GM12878 (cell line): ENCODE measurements at regions of chr6 and their contacts with region 1.

Region 1: DNA sequence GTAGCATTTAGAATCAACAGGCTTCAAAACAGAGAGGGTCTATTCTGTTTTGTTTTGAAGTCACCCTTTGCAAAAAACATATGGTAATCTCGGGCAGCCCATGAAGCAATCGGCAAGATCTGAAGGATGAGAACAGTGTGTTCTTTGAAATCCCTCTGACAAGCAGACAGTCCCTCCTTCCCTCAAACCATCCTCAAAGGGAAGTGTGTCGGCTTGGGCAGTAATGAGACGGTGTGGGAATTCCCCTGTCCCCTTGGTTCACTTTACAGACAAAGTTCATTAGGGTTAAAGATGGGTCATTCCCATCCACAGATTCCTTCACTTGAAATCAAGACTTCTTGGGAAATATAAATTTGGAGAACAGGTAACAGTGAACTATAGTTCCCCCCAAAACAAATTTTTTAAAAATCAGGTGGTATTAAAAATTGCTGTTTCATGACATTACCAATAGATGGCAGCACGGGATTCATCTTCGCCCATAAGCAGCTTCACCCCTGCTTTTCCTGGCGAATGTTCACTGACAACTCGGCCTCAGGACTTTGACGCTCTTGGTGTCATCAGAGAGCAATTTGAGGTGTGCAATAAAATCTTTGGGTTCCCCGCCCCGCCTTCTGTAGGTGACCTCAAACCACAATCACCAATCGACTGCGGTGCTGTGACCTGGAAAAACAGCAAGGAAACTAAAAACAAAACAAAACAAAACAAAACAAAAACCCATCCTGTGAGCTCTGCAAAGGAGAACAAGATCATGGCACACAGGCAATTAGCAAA is 159.3 kb upstream of the TNFAIP3 start:
- DNase-seq: peak; percentile 97
- ATAC-seq: peak; percentile 75
- H3K4me3 ChIP-seq: peak overlapping the region; percentile 49; the same call in 1 of the 2 replicates
- H3K27ac ChIP-seq: peak overlapping the region; percentile 64
- H3K4me1 ChIP-seq: peaks cover 39% of the 10 kb centered on the region
- H3K27me3 ChIP-seq: no peaks in the 10 kb centered on the region
- CTCF ChIP-seq: peak; percentile 67 to 88 (median 83); a peak in 5 of 6 replicates
- EP300 ChIP-seq: peak; percentile 33 to 57; a peak in 2 of 4 replicates
- POLR2A ChIP-seq: no peak
- RAD21 ChIP-seq: peak; percentile 91

Region 2: GRCh38 chr6:137661601-137662000 is 46.2 kb before region 1 on chr6:
- CTCF ChIA-PET with region 1: interaction called, 71 read pairs
- POLR2A ChIA-PET with region 1: interaction called, 3 read pairs
- RAD21 ChIA-PET with region 1: interaction called, 68 read pairs
- SMC1A ChIA-PET with region 1: interaction called, 236 read pairs
- in situ Hi-C with region 1: no loop called
- intact Hi-C with region 1: loop called (anchors 2 kb)
- DNase-seq: no peak
- ATAC-seq: peak; percentile 69
- H3K4me3 ChIP-seq: no peak overlapping the region
- H3K27ac ChIP-seq: no peak overlapping the region
- H3K4me1 ChIP-seq: peaks cover 5% of the 10 kb centered on the region; the same call in 1 of the 2 replicates
- H3K27me3 ChIP-seq: no peaks in the 10 kb centered on the region
- CTCF ChIP-seq: peak; percentile 51 to 75 (median 68)
- EP300 ChIP-seq: no peak
- POLR2A ChIP-seq: no peak
- RAD21 ChIP-seq: peak; percentile 66

Region 3: DNA sequence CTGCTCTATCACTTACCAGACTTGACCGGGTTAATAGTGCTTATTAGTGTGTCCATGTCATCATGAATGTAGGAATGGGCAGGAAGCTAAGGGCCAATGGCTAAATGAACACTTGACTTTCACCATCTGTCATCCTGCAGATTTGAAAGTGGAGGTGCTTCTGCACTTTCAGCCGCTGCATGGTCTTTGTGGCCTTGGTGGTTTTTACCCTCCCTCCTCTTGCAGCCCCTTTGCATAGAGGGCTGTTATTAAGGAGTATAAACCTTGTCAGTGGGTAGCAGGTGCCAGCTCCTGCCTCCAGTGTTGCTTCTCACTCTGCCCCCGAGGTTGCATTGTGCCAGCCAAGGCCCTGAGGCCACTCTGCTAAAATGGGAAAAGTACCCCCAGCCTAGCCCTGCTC is 37.1 kb after region 1 on chr6:
- CTCF ChIA-PET with region 1: interaction called, 10 read pairs
- POLR2A ChIA-PET with region 1: interaction called, 6 read pairs
- RAD21 ChIA-PET with region 1: interaction called, 7 read pairs
- SMC1A ChIA-PET with region 1: interaction called, 22 read pairs
- in situ Hi-C with region 1: no loop called
- intact Hi-C with region 1: loop called (anchors 2 kb)
- DNase-seq: peak; percentile 75
- ATAC-seq: peak; percentile 79
- H3K4me3 ChIP-seq: peak overlapping the region; percentile 29; the same call in 1 of the 2 replicates
- H3K27ac ChIP-seq: peak overlapping the region; percentile 34; the same call in 1 of the 2 replicates
- H3K4me1 ChIP-seq: peaks cover 36% of the 10 kb centered on the region
- H3K27me3 ChIP-seq: no peaks in the 10 kb centered on the region
- CTCF ChIP-seq: no peak
- EP300 ChIP-seq: peak; percentile 25 to 28; a peak in 2 of 4 replicates
- POLR2A ChIP-seq: no peak
- RAD21 ChIP-seq: no peak

Region 4: DNA sequence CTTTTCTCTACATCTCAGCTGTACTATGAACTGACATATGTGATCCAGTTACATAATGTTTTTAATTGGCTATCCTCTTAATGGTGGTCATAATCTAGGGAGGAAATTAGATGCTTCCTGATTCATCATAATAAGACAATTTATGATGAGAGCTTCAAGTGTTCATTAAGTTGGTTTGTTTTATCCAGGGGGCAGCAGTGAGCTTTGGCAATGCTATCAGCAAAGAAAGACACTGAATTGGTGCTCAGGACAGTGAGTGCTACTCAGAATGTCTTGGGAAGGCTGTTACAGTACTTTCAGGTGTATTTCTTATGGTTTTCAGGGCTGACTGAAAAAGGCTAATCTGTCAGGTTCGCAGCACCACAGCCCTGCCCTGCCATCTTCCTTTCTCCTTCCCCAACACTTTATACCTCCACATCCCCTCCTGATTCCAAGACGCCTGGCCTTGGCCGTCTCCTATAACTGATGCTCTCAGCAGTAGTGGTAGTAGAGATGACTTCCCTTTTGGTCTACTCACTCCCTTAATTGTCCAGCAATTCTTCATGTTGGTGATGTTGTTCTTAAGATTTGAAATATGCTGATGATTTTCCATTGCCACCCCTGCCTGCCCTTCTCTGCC is 92.3 kb after region 1 on chr6:
- CTCF ChIA-PET with region 1: interaction called, 37 read pairs
- POLR2A ChIA-PET with region 1: interaction called, 21 read pairs
- RAD21 ChIA-PET with region 1: interaction called, 41 read pairs
- SMC1A ChIA-PET with region 1: interaction called, 32 read pairs
- in situ Hi-C with region 1: loop called (anchors 5 kb)
- intact Hi-C with region 1: loop called (anchors 1 kb)
- DNase-seq: no peak
- ATAC-seq: peak; percentile 96
- H3K4me3 ChIP-seq: no peak overlapping the region
- H3K27ac ChIP-seq: no peak overlapping the region
- H3K4me1 ChIP-seq: peaks cover 19% of the 10 kb centered on the region
- H3K27me3 ChIP-seq: no peaks in the 10 kb centered on the region
- CTCF ChIP-seq: peak; percentile 67 to 78 (median 70)
- EP300 ChIP-seq: no peak
- POLR2A ChIP-seq: no peak
- RAD21 ChIP-seq: peak; percentile 88

Region 5: GRCh38 chr6:137873273-137873762 is 165.5 kb after region 1 on chr6:
- CTCF ChIA-PET with region 1: interaction called, 84 read pairs
- POLR2A ChIA-PET with region 1: interaction called, 13 read pairs
- RAD21 ChIA-PET with region 1: interaction called, 80 read pairs
- SMC1A ChIA-PET with region 1: interaction called, 117 read pairs
- in situ Hi-C with region 1: loop called (anchors 5 kb)
- intact Hi-C with region 1: no loop called
- DNase-seq: peak; percentile 95
- ATAC-seq: peak; percentile 54
- H3K4me3 ChIP-seq: peak overlapping the region; percentile 99
- H3K27ac ChIP-seq: peak overlapping the region; percentile 88
- H3K4me1 ChIP-seq: no peaks in the 10 kb centered on the region
- H3K27me3 ChIP-seq: no peaks in the 10 kb centered on the region
- CTCF ChIP-seq: no peak
- EP300 ChIP-seq: peak; percentile 62 to 64; a peak in 2 of 4 replicates
- POLR2A ChIP-seq: 0 out of 2 replicates have a peak, but pooled peaks have one; percentile 27
- RAD21 ChIP-seq: no peak

Region 6: DNA sequence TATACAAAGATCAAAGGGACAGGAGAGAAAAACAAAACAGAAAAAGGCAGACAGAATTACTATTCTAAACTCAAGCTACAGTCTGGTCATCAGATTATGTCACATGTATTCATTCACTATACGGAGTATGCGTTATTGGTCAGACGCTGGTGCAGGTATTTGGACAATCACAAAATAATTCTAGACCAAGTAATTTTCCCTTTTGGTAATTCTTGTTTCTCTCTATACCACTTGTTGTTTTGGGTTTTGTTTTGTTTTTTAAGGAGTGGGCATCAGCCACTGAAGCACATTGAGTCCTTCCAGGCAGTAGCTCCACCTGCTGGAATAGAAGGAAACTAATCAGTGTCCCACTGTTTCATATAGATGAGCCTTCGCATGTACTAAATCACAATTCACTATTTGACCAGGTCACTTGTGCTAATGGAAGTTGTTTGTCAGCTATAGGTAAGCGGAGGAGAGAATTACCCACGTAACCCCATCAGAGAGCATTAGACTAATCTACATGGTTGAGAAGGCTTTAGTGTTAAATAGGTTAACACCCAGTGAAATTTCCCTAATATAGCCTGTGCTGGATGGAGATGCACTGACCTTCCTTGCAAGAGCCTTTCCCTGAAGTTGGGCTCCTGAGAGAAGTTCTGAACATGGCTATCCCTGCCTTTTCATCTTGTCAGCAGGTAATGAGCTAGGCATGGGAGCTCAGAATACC is 237.2 kb after region 1 on chr6:
- CTCF ChIA-PET with region 1: interaction called, 174 read pairs
- POLR2A ChIA-PET with region 1: interaction called, 4 read pairs
- RAD21 ChIA-PET with region 1: interaction called, 127 read pairs
- SMC1A ChIA-PET with region 1: interaction called, 84 read pairs
- in situ Hi-C with region 1: loop called (anchors 5 kb)
- intact Hi-C with region 1: loop called (anchors 1 kb)
- DNase-seq: no peak
- ATAC-seq: peak; percentile 72
- H3K4me3 ChIP-seq: peak overlapping the region; percentile 37; the same call in 1 of the 2 replicates
- H3K27ac ChIP-seq: peak overlapping the region; percentile 42
- H3K4me1 ChIP-seq: peaks cover 37% of the 10 kb centered on the region
- H3K27me3 ChIP-seq: no peaks in the 10 kb centered on the region
- CTCF ChIP-seq: peak; percentile 75 to 80 (median 75)
- EP300 ChIP-seq: no peak
- POLR2A ChIP-seq: no peak
- RAD21 ChIP-seq: peak; percentile 83

Region 7: DNA sequence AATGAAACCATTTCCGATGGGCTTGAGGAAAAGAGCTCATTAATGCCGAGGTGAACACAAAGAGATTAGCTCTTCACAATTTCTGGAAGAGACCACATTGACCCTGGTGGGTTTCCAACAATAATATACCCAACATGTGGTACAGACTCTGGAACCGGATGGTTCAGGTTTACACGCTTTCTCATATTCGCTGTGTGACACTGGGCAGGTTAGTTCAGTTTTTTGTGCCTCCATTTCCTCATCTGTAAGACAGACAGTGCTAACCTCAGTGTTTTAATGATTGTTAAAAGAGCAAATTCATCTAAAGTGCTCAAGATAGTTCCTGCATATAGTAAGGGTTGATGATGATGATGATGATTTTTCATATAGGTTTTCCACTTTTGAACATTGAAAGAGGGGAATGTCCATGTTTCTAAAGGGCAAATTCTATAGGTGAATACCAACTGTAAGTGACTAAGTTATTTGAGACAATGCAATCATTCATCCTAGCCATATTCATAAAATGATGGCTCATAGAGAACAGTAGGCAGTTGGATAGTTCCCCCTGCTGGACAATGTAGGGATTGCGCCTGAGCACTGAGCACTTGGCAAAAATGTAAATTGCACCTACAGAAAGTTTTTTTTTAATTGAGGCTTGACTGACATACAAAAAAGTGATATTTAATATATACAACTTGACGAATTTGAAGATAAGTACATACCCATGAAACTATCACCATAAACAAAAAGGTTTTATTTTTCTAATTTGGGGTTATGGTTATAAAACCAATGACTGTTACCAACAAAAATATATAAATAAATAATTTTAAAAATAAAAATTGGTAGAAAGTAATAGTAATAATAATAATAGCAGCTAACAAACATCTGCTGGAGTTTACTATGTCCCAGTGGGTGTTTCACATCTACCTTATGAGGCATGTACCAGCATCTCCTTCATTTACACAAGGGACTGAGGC is 401.5 kb after region 1 on chr6:
- CTCF ChIA-PET with region 1: interaction called, 7 read pairs
- POLR2A ChIA-PET with region 1: no interaction called
- RAD21 ChIA-PET with region 1: interaction called, 4 read pairs
- SMC1A ChIA-PET with region 1: interaction called, 4 read pairs
- in situ Hi-C with region 1: no loop called
- intact Hi-C with region 1: loop called (anchors 2 kb)
- DNase-seq: peak; percentile 21
- ATAC-seq: peak; percentile 52
- H3K4me3 ChIP-seq: no peak overlapping the region
- H3K27ac ChIP-seq: no peak overlapping the region
- H3K4me1 ChIP-seq: 0 out of 2 replicates have a peak, but pooled peaks cover 5% of the 10 kb centered on the region
- H3K27me3 ChIP-seq: peaks cover 2 to 31% of the 10 kb centered on the region in 2 experiments
- CTCF ChIP-seq: peak; percentile 84 to 94 (median 91)
- EP300 ChIP-seq: no peak
- POLR2A ChIP-seq: no peak
- RAD21 ChIP-seq: peak; percentile 88